Left cardiac atrium (tissue), 4 donors: ENCODE measurements at regions of chr15 and their contacts with region 1.

Region 1: DNA sequence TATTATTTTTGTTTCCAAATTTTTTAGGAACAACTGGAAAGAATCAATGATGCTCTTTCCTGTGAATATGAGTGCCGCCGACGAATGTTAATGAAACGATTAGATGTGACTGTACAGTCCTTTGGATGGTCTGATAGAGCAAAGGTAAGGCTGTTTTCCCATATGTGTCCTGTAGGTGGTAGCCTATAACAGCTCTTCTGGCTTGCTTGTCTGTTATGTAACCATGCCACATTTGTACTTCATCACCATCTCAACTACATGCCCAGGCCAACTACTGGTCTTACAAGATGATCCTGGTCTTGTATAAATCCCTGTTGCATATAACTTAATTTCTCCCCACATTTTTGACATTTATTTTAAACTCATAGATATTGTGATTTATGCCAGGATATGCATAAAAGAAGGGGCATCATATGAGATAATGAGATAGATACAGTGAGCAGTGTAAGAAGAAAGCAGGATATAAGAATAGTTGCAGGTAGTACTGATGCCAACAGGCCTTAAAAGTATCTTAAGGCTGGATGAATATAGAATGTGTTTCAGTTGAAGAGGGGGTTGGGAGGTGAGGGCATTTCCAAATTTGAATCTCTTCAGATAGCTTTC is 20.3 kb downstream of the FAM98B start:
- DNase-seq: no peak
- ATAC-seq: peak; percentile 94 to 96

Region 2: DNA sequence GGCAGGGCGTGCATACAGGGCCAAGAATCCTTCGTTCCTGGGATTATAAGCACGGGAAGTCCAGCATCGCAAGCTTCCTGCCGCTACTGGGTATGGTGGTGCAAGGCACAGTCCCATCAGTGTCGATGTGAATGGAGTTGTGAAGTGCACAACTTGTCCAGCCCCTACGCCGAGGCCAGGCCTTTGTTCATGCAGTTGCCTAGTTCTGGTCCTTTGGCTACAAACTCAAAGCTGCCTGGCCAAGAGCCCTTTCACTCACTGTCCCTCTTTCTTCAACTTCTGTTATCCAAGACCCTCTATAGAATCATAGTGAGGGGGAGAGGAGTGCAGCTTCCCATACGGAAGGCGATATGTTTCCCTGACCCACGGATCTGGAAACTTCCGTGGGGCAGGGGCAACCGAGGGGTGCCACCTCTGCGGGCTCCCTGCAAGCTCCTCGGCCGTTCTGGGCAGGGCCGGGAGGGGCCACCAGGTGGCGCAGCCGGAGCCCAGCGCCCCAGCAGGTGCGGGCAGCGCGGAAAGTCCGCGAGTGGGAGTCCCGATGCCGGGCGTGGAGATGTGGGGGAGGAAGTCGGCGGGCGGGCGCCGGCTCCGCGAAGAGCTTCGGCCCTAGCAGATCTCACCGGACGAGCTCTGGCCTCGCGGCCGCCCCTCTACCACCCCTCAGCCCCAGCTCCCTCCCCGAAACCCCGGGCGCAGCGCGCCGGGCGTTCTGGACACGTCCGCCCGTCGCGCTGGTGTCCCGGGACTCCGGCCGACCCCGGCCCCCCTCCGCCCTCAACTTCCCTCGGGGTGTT is 89.7 kb after region 1 on chr15:
- intact Hi-C with region 1: loop called in 1 of 2 experiments (anchors 10 kb)
- DNase-seq: peak; percentile 73
- ATAC-seq: peak; percentile 92 to 93

Region 3: GRCh38 chr15:38624244-38625205 is 150.3 kb after region 1 on chr15:
- intact Hi-C with region 1: loop called in 1 of 2 experiments (anchors 5 kb)
- DNase-seq: no peak
- ATAC-seq: peak in 1 of 2 donors; percentile 29

Region 4: GRCh38 chr15:38636597-38636996 is 162.3 kb after region 1 on chr15:
- intact Hi-C with region 1: no loop called
- DNase-seq: peak; percentile 30
- ATAC-seq: peak in 1 of 2 donors; percentile 51

Region 5: GRCh38 chr15:38660738-38661137 is 186.5 kb after region 1 on chr15:
- intact Hi-C with region 1: loop called in 1 of 2 experiments (anchors 10 kb)
- DNase-seq: no peak
- ATAC-seq: no peak

Region 6: DNA sequence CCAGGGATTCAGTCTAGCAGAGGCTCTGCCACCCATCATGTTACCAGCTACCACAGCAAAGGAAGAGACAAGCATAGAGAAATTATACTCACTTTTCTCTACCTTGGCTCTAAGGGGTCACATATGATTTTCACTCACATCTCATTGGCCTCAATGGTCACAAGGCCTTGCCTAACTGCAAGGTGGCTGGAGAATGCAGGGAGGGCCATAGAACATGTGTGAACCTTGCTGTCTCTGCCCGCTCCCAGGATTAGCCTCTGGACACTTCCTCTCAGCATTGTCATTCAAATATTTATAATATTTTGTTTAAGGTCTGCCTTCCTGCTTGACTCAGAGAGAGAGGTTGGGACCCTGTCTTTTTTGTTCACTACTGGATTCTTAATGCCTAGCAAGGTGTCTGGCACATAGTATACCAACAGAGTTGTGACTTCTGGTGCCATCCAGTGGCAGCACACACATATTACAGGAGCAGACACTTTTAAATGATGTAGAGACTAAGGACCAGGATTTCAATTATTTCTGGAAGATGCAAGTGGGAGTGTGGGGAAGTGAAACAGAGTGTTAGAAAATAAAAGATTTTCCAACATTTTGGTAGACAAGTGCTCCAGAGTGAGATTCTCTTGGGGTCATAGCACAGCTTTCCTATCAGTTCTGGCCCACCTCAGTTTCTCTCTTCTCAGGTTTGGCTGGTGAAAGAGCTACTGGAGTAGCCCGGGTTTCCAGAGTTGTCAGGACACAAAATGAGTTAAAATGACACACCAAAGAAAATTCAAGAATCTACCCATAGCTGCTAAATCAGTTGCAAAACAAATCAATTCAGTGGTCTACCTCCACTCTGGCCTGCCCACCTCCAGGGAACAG is 209.4 kb after region 1 on chr15:
- intact Hi-C with region 1: loop called in 1 of 2 experiments (anchors 2 kb)
- DNase-seq: peak; percentile 46
- ATAC-seq: peak; percentile 80 to 86